Activated CD4-positive, alpha-beta T cell treated with anti-CD3 and anti-CD28 coated beads, Interleukin-2, amount 10 ng/mL, durations not matched to agents 24 days and 14 days (primary cell): ENCODE measurements at regions of chr2 and their contacts with region 1.

Region 1: DNA sequence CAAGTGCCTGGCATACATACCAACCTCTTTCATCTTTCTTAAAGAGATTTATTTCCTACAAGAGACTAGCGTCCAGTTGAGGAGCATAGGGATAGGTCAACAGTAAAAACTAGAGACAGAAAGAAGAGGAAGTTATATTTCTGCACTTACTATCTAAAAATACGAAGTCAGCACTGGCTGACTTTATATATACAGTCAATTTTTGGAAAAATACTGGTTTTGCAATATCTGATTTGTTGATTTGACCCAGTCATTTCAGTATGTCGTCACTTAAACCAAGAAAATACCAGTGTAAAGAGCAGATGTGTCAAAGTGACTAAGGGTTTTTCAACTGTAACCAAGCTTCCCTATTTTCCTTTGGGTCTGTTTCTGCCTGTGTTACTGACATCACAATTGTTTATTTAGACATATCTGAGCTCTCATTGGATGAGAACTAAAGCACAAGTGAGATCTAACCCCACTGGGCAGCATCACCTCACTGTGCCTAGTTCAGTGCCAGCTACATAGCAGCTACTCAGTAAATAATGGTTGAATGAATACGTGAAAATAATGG is 23.0 kb downstream of the CYTIP start:
- DNase-seq: peak; percentile 78
- H3K4me3 Mint-ChIP-seq: peak overlapping the region; percentile 24
- H3K27ac Mint-ChIP-seq: peak overlapping the region; percentile 84
- H3K4me1 Mint-ChIP-seq: peaks cover 59% of the 10 kb centered on the region
- H3K27me3 Mint-ChIP-seq: no peaks in the 10 kb centered on the region

Region 2: DNA sequence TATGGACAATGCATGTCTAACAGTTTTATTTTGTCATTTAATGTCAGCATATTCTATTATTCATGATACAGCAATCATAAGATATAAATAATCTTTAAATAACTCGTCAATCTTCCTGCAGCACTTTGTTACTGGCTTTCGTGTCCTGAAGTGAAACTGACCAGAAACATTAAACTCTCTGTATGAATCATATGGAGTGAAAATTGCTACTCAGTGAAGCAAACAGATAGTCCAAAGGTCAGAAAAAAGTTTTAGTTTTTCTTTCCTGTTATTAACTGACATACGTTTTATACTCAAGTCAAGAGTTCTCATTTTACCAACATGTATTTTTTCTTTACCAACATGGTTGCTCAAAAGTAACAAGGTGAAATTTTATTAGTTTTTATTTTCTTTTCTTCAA is 270.1 kb before region 1 on chr2:
- intact Hi-C with region 1: no loop called
- DNase-seq: no peak
- H3K4me3 Mint-ChIP-seq: no peak overlapping the region
- H3K27ac Mint-ChIP-seq: no peak overlapping the region
- H3K4me1 Mint-ChIP-seq: no peaks in the 10 kb centered on the region
- H3K27me3 Mint-ChIP-seq: peaks cover 6% of the 10 kb centered on the region

Region 3: DNA sequence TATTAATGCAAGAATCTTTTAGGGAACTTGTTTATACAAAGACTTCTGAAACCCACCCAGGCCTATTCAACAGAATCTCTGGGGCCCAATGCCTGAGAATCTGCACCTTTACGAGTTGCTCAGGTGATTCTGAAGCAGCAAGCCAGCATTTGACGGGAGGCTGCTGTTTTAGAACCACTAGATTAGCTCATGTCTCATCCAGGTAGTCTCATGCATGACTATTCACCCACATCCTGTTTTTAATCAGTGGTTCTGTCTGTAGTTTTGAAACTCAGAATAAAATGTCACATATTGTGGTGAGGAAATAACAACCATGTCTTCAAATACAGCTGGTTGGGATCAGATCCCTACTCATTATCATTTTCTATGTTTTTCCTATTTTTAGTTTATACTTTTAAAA is 16.5 kb before region 1 on chr2:
- intact Hi-C with region 1: loop called (anchors 2 kb)
- DNase-seq: peak; percentile 91
- H3K4me3 Mint-ChIP-seq: peak overlapping the region; percentile 71
- H3K27ac Mint-ChIP-seq: peak overlapping the region; percentile 88
- H3K4me1 Mint-ChIP-seq: peaks cover 53% of the 10 kb centered on the region
- H3K27me3 Mint-ChIP-seq: no peaks in the 10 kb centered on the region

Region 4: DNA sequence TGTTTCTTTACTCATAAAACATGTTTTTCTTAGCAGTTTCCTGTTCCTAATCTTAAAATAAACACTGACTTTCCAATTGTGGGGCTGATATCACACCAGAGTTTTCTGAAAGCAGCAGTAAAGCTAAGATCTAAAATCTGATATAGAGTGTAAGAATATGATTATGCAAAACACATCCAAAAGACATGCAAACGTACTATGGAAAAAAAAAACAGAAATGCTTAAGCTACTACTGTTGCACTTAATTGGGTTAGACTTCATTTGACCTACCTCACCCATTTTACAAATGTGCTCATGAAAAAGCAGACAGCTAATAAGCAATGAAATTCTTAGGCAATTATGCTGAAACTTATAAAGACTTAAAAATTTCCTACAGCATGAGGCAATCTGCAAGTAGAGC is 12.5 kb after region 1 on chr2:
- intact Hi-C with region 1: loop called (anchors 1 kb)
- DNase-seq: peak; percentile 56
- H3K4me3 Mint-ChIP-seq: peak overlapping the region; percentile 92
- H3K27ac Mint-ChIP-seq: peak overlapping the region; percentile 90
- H3K4me1 Mint-ChIP-seq: peaks cover 78% of the 10 kb centered on the region
- H3K27me3 Mint-ChIP-seq: no peaks in the 10 kb centered on the region

Region 5: GRCh38 chr2:157468931-157469708 is 48.3 kb after region 1 on chr2:
- intact Hi-C with region 1: loop called (anchors 1 kb)
- DNase-seq: peak; percentile 82
- H3K4me3 Mint-ChIP-seq: peak overlapping the region; percentile 78
- H3K27ac Mint-ChIP-seq: peak overlapping the region; percentile 97
- H3K4me1 Mint-ChIP-seq: peaks cover 82% of the 10 kb centered on the region
- H3K27me3 Mint-ChIP-seq: no peaks in the 10 kb centered on the region